Heart right ventricle (tissue), 16 donors: ENCODE measurements at regions of chr11 and their contacts with region 1.

Region 1: DNA sequence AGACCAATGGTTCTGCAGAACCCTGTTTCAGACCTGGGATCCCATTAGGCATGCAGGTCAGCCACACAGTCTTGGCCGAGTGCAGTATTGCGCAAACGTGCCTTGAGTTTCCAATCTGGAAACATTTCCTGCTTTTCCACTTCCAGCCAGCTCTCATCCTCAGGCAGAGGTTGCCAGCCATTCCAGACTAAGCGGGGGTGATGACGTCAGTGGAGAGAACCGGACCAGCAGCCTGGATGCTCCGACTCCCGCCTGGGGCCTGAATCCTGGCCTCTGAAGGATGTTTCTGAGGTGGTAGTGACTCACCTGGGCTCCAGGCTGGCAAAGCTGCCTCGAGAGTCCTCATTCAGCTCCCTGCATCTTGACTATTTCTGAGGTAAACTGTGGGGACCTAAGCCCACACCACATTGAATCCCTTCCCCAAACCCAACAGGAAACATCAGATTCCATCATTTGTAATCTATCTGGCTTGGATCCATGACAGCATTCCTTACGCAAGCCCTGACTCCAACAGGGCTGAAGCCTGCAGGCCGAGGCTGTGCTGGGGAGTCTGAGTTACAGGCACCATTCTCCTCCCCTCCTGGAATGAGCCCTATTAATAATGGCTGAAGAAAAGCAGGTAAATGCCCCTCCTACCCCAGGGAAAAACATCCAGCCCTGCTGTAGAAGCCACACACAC is 82.9 kb downstream of the ABTB2 start:
- DNase-seq: peak; percentile 74 to 85
- ATAC-seq: peak; percentile 87 to 94 (median 89)
- H3K4me3 ChIP-seq: no peak overlapping the region
- H3K27ac ChIP-seq: peak overlapping the region in 8 of 10 donors; percentile 9 to 65 (median 60)
- H3K4me1 ChIP-seq: peaks cover 0 to 29% (median 14%) of the 10 kb centered on the region in 9 donors
- H3K27me3 ChIP-seq: no peaks in the 10 kb centered on the region
- CTCF ChIP-seq: no peak

Region 2: GRCh38 chr11:34313099-34313517 is 38.2 kb after region 1 on chr11:
- intact Hi-C with region 1: loop called in 2 of 10 experiments (anchors 1 to 5 kb)
- DNase-seq: peak; percentile 20 to 26
- ATAC-seq: peak in 6 of 8 donors; percentile 10 to 34 (median 28)
- H3K4me3 ChIP-seq: no peak overlapping the region
- H3K27ac ChIP-seq: peak overlapping the region in 4 of 10 donors; percentile 3 to 26 (median 16)
- H3K4me1 ChIP-seq: peaks cover 17 to 73% (median 33%) of the 10 kb centered on the region in 9 donors
- H3K27me3 ChIP-seq: no peaks in the 10 kb centered on the region
- CTCF ChIP-seq: no peak

Region 3: GRCh38 chr11:34706709-34707461 is 432.0 kb after region 1 on chr11:
- intact Hi-C with region 1: no loop called
- DNase-seq: no peak
- ATAC-seq: no peak
- H3K4me3 ChIP-seq: no peak overlapping the region
- H3K27ac ChIP-seq: no peak overlapping the region
- H3K4me1 ChIP-seq: no peaks in the 10 kb centered on the region
- H3K27me3 ChIP-seq: no peaks in the 10 kb centered on the region
- CTCF ChIP-seq: no peak